Upper lobe of right lung (tissue), 1 donor: ENCODE measurements at regions of chr17 and their contacts with region 1.

Region 1: DNA sequence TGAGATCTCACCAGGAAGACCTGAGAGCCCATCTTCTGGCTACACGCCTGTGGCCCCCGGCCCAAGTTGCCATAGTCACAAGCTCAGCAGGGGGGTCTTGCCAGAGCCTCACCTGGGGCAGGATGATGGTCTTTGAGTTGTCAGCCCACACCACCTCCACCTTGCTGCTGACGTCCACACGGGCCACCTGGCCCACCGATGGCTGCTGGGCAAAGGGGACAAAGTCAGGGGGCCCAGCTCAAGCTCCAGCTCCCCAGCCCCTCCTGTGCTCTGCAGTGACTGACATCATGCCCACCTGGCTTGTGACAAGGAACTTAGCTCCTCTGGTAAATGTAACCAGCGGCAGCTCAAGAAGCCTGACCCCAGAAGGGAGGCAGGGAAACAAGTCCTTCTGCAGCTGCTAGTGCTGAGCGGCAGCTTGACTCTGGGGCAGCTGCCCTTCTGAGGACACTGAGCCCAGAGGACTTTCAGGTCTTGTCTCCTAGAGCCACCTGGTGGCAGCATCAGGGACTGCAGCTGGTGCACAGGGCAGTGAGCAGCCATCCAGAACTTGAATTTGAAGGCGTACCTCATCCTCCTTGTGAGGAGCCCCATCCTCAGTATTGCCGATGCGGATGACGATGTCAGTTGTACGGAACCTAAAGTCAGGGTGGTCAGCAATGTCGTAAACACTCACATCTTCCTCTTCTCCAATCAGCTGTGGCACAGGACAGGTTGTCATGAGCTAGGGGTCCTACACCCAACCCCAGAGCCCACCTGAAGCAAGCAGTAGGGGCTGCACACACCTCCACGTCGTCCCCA is 13.5 kb downstream of the SPHK1 start:
- DNase-seq: peak; percentile 91
- ATAC-seq: peak; percentile 90
- H3K4me3 ChIP-seq: no peak overlapping the region
- H3K27ac ChIP-seq: no peak overlapping the region
- H3K4me1 ChIP-seq: no peaks in the 10 kb centered on the region
- H3K27me3 ChIP-seq: no peaks in the 10 kb centered on the region
- CTCF ChIP-seq: peak; percentile 99

Region 2: DNA sequence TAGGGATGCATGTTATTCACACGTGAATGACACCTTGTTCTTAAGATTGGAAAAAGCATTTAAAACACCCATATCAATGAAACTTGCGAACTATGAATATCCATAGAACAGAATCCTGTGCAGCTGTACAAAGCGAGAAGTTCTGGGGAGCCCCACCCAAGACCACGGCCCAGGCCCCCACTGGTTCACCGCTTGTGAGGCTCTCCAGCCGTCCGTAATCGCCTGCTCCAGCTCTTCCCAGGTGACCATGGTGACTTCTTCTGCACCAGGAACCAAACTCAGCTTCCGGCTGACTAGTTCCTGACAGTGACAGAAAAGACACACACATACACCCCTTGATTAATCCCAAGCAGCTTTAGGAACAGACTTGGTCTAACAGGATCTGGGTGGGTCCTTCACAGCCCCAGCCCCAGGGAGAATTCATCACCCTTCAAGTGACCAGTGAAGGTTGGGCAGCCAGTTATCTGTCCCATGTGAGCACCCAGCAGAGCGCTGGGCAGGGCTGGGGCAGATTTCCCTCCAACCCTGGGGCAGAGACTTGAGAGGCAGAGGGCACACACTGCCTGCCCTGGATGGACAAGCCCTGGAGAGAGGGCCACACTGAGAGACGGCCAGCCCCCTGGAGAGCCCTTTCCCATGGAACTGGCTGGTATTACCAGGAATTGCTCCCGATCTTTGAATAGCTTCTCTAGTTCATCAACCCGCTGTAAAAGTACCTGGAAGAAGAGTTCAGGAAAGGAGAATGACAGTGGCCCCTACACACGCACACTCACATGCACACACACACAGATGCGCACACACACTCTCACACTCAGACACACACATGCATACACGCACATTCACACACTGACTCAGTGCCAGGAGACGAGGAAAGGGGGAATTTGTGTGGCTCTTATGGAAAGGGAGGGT is 93.4 kb before region 1 on chr17:
- intact Hi-C with region 1: loop called (anchors 5 kb)
- DNase-seq: no peak
- ATAC-seq: no peak
- H3K4me3 ChIP-seq: no peak overlapping the region
- H3K27ac ChIP-seq: no peak overlapping the region
- H3K4me1 ChIP-seq: no peaks in the 10 kb centered on the region
- H3K27me3 ChIP-seq: no peaks in the 10 kb centered on the region
- CTCF ChIP-seq: no peak